Right ventricle myocardium inferior (tissue), 1 donor: ENCODE measurements at regions of chr11 and their contacts with region 1.

Region 1: GRCh38 chr11:68839054-68839865 is 2.5 kb downstream of the CPT1A start:
- DNase-seq: peak; percentile 98
- ATAC-seq: peak; percentile 85

Region 2: DNA sequence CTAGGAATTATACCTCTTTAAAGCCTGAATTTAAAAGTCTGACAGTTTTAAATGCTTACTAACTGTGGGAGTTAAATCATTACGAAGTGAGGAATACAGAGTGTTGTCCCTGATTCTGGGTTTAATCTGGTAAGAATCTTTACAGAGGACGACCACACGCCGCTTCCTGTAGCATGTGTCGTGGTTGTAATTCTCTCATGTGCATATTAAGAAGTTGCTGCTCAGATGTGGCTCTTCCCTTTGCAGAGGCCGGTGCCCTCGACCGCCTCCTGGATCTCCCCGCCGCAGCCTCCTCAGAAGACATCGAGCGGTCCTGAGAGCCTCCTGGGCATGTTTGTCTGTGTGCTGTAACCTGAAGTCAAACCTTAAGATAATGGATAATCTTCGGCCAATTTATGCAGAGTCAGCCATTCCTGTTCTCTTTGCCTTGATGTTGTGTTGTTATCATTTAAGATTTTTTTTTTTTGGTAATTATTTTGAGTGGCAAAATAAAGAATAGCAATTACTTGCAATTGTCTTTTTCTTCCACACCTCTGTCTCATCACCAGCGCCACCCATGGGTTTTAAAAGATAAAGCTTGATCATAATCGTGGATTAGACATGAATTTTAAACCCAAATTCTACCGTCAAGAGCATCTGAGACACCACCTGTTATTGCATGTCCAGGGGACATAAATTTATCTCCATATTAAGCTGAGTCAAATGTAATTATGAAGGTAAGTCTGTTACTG is 148.4 kb before region 1 on chr11:
- intact Hi-C with region 1: no loop called
- DNase-seq: no peak
- ATAC-seq: no peak

Region 3: GRCh38 chr11:68783216-68783821 is 55.9 kb before region 1 on chr11:
- intact Hi-C with region 1: loop called (anchors 2 kb)
- DNase-seq: no peak
- ATAC-seq: peak; percentile 79

Region 4: DNA sequence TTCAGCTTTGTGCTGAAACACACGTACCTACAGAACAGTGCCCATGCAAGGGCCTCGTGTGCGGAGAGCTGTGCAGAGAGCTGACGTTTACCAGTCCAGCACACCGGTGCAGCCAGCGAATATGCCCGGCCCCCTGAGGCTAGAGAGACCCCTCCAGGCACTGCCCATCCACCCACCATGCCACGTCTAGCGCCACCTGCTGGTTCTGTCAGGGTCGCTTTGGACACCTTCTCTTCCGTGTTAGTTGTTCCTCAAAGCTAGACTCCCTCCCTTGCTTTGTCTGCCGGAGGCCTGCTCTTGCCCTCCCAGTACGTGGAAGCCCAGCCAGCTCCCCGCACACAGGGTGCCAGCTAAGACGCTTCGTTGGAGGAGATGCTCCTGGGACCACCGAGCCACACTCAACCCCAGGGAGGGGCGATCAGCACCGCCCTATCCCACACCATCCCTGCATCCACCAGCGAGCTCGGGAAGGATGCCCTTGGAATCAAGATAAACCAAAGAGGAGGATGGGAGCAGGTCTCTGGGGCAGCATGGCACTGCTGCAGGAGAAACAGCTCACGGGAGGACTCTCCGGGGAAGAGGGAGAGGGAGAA is 40.9 kb before region 1 on chr11:
- intact Hi-C with region 1: loop called (anchors 5 kb)
- DNase-seq: no peak
- ATAC-seq: no peak

Region 5: GRCh38 chr11:68810164-68810563 is 29.1 kb before region 1 on chr11:
- intact Hi-C with region 1: loop called (anchors 2 kb)
- DNase-seq: no peak
- ATAC-seq: peak; percentile 76

Region 6: DNA sequence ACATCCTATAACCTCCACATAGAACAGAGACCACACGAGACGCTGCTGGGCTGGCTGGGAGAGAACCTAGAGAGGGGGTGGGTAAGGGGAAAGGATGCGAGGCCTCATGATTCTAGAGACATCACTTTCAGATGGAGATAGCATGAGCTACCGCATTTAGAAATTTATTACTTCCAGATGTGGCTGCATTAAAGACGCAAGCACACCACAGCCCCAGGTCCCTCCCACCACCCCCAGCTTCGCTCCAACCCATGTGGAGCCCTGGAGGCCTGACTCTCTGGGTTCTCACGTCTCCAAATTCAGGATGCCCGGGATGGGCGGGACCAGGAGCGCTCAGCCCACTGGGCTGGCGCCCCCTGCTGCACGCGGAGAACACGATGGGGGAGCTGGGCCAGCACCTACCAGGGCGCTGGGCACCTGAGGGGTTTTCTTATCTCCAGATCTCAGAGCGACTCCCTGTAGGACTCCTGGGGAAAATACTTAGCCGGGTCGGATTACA is 50.7 kb after region 1 on chr11:
- intact Hi-C with region 1: loop called (anchors 2 kb)
- DNase-seq: peak; percentile 77
- ATAC-seq: peak; percentile 82

Region 7: GRCh38 chr11:68903288-68904247 is 64.3 kb after region 1 on chr11 and contains the starts of genes IGHMBP2 and MRPL21:
- intact Hi-C with region 1: loop called (anchors 2 kb)
- DNase-seq: peak; percentile 95
- ATAC-seq: peak; percentile 96
- total RNA-seq, gene IGHMBP2: 13.8 TPM
- total RNA-seq, gene MRPL21: 120 TPM